PC-3 (cell line): ENCODE measurements at regions of chr7 and their contacts with region 1.

Region 1: DNA sequence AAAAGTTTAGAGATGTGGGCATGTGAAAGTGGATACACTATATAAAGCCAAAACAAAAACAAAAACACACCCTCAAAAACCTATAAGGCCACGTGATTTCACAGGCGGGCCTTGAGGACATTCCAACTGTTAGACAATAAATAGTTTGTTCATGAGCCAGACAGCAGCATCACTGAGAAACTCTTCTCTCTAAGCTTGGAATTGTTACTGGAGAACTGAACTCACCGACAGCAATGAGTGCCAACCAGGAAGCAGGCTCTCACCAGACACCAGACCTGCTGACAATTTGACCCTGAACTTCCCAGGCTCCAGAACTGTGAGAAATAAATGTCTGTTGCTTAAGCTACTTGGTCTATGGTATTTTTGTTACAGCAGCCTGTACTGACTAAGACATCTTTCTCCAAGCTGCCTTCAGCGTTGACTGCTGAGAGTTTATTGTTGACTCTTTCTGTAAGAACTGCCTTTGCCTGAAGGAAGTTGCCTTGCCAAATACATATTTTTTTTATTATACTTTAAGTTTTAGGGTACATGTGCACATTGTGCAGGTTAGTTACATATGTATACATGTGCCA is 107.5 kb downstream of the EPDR1 start:
- DNase-seq: peak; percentile 62
- ATAC-seq: peak; percentile 52
- H3K4me3 ChIP-seq: no peak overlapping the region
- H3K27ac ChIP-seq: no peak overlapping the region
- H3K4me1 ChIP-seq: peaks cover 8% of the 10 kb centered on the region
- H3K27me3 ChIP-seq: no peaks in the 10 kb centered on the region
- CTCF ChIP-seq: no peak

Region 2: DNA sequence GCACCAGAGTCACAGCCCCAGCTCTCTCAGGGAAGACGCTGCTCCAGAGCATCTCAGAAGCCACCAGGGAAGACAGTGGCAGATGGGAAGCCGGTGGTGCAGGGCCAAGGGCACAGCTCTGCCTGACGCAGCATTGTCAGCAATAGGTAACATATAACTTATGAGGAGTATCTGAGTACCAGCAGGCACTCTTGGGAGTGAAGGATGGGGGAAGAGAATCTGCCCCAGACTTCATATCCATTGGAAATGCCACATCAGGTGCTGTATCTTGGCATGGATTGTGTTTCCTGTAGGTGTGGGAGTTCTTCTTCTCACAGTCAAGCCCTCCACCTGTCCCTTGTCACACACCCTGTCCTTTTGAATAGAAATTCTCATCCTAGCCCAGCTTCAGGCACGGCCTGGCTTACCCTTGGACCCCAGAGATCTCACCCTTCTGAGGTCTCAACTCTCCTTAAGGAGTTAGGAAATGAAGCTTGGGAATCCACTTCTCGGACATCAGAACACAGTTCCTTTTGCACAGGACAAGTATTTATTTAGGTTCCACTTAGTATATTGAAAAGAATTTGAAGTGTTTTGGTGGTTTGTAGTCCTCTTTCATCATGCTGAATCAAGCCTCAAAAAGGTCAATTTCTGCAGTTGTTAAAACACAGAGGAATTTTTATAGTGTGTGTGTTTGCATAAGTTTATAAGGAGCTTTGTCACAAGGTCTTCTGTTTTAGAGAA is 97.6 kb before region 1 on chr7:
- CTCF ChIA-PET with region 1: no interaction called
- POLR2A ChIA-PET with region 1: no interaction called
- intact Hi-C with region 1: loop called (anchors 1 kb)
- DNase-seq: peak; percentile 78
- ATAC-seq: peak; percentile 89
- H3K4me3 ChIP-seq: peak overlapping the region; percentile 15; the same call in 1 of the 2 replicates
- H3K27ac ChIP-seq: peak overlapping the region; percentile 52
- H3K4me1 ChIP-seq: peaks cover 16% of the 10 kb centered on the region
- H3K27me3 ChIP-seq: no peaks in the 10 kb centered on the region
- CTCF ChIP-seq: no peak

Region 3: GRCh38 chr7:37977243-37977642 is 50.7 kb before region 1 on chr7:
- CTCF ChIA-PET with region 1: no interaction called
- POLR2A ChIA-PET with region 1: no interaction called
- intact Hi-C with region 1: loop called (anchors 2 kb)
- DNase-seq: peak; percentile 83
- ATAC-seq: peak; percentile 100
- H3K4me3 ChIP-seq: no peak overlapping the region
- H3K27ac ChIP-seq: peak overlapping the region; percentile 61
- H3K4me1 ChIP-seq: peaks cover 17% of the 10 kb centered on the region
- H3K27me3 ChIP-seq: no peaks in the 10 kb centered on the region
- CTCF ChIP-seq: no peak

Region 4: GRCh38 chr7:38561166-38561565 is 533.2 kb after region 1 on chr7:
- CTCF ChIA-PET with region 1: no interaction called
- POLR2A ChIA-PET with region 1: no interaction called
- intact Hi-C with region 1: no loop called
- DNase-seq: peak; percentile 32
- ATAC-seq: no peak
- H3K4me3 ChIP-seq: no peak overlapping the region
- H3K27ac ChIP-seq: no peak overlapping the region
- H3K4me1 ChIP-seq: no peaks in the 10 kb centered on the region
- H3K27me3 ChIP-seq: no peaks in the 10 kb centered on the region; the same call in 1 of the 2 replicates
- CTCF ChIP-seq: no peak